ENCODE measurements at regions of chr1 and their contacts with region 1.

Region 1: GRCh38 chr1:17661546-17662157 is 93.5 kb upstream of the ACTL8 start:
- DNase-seq: peak; percentile 88
- ATAC-seq: peak; percentile 76
- H3K4me3 Mint-ChIP-seq: no peak overlapping the region
- H3K27ac Mint-ChIP-seq: peak overlapping the region; percentile 74
- H3K4me1 Mint-ChIP-seq: peaks cover 11% of the 10 kb centered on the region
- H3K27me3 Mint-ChIP-seq: no peaks in the 10 kb centered on the region
- CTCF ChIP-seq: peak; percentile 97

Region 2: DNA sequence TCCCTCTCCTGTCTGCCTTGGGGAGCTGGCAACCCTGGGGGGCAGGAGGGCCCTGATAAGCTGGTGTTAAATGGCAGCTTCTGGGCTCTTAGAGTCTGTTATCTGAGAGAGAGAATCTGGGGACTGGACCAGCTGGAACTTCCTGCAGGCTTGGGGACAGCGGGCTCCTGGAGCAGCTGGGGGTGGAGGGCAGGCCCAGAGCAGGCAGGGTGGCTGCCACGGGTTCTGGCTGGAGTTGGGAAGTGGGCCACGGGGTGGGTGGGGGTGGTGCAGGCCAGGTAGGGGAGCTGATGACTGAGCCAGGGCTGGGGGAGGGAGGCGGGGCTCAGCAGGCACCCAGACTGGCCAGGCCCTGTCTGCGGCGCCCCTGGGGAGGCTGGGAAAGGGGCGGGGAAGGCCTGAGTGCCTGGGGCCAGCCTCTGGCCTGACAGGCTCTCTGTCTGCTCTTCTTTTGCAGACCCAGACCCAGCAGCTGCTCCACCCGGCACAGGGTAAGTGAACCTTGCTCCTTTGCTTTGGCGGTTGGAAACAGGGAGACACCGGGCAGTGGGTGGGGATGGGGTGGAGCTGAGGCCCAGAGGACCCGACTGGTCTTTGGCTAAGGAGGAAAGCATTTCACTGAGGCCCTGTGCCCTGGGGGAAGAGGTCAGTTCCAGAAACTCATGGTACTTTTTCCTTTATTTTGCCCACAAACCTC is 73.5 kb before region 1 on chr1:
- CTCF ChIA-PET with region 1: interaction called, 13 read pairs
- POLR2A ChIA-PET with region 1: no interaction called
- DNase-seq: peak; percentile 56
- ATAC-seq: peak; percentile 53
- H3K4me3 Mint-ChIP-seq: no peak overlapping the region
- H3K27ac Mint-ChIP-seq: peak overlapping the region; percentile 89
- H3K4me1 Mint-ChIP-seq: peaks cover 38% of the 10 kb centered on the region
- H3K27me3 Mint-ChIP-seq: no peaks in the 10 kb centered on the region
- CTCF ChIP-seq: no peak

Region 3: DNA sequence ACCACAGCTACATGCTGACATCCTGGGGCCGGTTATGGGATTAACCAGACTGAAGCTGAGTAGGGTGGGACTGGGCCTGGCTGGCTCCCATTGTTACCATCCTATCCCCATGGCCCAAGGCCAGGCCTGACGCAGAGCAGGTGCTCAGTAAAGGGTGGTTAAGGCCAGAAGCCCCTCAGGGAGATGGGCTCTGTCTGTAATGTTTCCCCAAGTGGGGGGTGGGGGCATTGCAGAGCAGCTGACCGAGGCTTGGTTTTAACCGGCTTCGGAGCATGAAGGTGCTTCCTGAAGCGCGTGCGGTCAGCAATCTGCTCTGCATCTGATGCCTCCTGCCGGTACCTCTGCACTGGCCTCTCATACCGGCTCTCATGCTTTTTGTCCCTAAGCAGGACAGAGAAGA is 10.1 kb after region 1 on chr1:
- CTCF ChIA-PET with region 1: interaction called, 57 read pairs
- POLR2A ChIA-PET with region 1: no interaction called
- DNase-seq: peak; percentile 48
- ATAC-seq: peak; percentile 54
- H3K4me3 Mint-ChIP-seq: no peak overlapping the region
- H3K27ac Mint-ChIP-seq: no peak overlapping the region
- H3K4me1 Mint-ChIP-seq: peaks cover 22% of the 10 kb centered on the region
- H3K27me3 Mint-ChIP-seq: no peaks in the 10 kb centered on the region
- CTCF ChIP-seq: no peak

Region 4: DNA sequence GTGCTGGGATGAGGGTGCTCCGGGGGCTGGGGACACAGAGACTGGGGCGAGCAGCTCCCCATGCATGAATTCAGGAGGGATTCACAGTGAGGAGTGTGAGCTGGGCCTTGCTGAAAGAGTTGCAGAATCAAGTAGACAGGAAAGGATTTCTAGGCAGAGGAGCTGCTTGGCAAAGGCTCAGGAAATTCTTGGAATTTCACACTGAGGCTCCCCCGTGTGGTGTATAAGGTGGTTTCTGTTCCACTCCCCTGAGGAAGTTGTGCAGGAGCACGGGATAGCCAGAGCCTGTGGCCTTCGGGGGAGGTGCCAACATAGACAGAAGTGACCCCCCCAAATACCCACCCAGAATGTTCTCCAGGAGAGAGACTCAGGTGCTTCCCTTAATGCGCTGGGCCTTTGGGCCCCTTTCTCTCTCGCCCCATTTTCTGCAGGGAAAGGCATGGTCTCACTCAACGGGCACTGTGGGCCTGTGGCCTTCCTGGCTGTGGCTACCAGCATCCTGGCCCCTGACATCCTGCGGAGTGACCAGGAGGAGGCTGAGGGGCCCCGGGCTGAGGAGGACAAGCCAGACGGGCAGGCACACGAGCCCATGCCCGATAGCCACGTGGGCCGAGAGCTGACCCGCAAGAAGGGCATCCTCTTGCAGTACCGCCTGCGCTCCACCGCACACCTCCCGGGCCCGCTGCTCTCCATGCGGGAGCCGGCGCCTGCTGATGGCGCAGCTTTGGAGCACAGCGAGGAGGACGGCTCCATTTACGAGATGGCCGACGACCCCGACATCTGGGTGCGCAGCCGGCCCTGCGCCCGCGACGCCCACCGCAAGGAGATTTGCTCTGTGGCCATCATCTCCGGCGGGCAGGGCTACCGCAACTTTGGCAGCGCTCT is 35.0 kb after region 1 on chr1:
- CTCF ChIA-PET with region 1: interaction called, 79 read pairs
- POLR2A ChIA-PET with region 1: no interaction called
- DNase-seq: peak; percentile 68
- ATAC-seq: peak; percentile 81
- H3K4me3 Mint-ChIP-seq: no peak overlapping the region
- H3K27ac Mint-ChIP-seq: peak overlapping the region; percentile 90
- H3K4me1 Mint-ChIP-seq: peaks cover 18% of the 10 kb centered on the region
- H3K27me3 Mint-ChIP-seq: no peaks in the 10 kb centered on the region
- CTCF ChIP-seq: no peak

Region 5: DNA sequence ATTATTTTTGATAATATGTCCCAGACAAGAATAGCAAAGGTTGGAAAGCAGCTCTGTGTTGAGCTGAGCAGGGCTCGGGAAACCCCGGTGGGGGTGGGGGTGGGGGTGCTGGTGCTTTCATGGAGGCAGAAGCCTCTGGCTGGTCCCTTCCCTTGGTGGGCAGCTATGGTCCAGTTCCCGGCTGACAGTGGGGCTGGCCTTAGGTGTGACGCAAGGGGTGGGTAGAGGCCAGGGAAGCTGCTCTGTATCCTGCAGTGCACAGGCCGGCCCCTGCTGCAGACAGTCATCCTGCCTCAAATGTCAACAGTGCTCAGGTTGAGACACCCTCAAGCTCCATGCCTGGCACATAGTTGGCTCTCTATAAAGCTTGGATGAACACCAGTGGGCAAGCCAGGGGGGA is 102.3 kb after region 1 on chr1:
- CTCF ChIA-PET with region 1: interaction called, 11 read pairs
- POLR2A ChIA-PET with region 1: no interaction called
- DNase-seq: no peak
- ATAC-seq: no peak
- H3K4me3 Mint-ChIP-seq: no peak overlapping the region
- H3K27ac Mint-ChIP-seq: no peak overlapping the region
- H3K4me1 Mint-ChIP-seq: 0 out of 2 replicates have a peak, but pooled peaks cover 3% of the 10 kb centered on the region
- H3K27me3 Mint-ChIP-seq: peaks cover 13% of the 10 kb centered on the region
- CTCF ChIP-seq: no peak

Region 6: GRCh38 chr1:17826165-17826488 is 164.5 kb after region 1 on chr1:
- CTCF ChIA-PET with region 1: interaction called, 21 read pairs
- POLR2A ChIA-PET with region 1: no interaction called
- DNase-seq: peak; percentile 83
- ATAC-seq: peak; percentile 81
- H3K4me3 Mint-ChIP-seq: no peak overlapping the region
- H3K27ac Mint-ChIP-seq: no peak overlapping the region
- H3K4me1 Mint-ChIP-seq: peaks cover 7% of the 10 kb centered on the region
- H3K27me3 Mint-ChIP-seq: peaks cover 4% of the 10 kb centered on the region; the same call in 1 of the 2 replicates
- CTCF ChIP-seq: peak; percentile 80

Region 7: DNA sequence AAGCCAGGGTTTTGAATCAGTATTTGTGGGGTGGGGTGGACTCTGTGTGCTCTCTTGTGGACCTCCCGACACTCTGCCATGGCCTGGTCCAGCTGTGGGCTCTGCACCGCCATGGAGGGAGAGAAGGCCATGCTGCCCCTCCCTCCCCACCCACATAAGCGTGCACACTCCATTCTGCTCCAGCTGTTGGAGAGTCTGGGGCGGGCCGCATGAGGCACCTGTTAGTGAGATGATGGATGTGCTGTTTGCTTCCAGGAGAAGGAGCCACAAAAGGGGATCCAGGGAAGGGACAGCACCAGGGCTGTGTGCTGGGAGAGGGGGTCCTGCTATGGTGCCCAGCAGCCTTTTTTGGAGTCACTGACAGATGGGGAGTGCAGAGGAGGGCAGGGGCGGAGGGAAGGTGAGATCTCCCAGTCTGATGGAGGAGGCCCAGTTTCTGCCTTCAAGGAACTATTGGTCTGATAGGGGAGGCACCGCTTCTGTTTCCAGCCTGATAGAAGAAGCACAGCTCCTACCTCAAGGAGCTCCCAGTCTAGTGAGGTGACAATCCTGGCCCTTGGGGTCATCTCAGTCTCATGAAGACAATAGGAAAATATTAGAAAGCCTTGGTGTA is 194.9 kb after region 1 on chr1:
- CTCF ChIA-PET with region 1: no interaction called
- POLR2A ChIA-PET with region 1: no interaction called
- DNase-seq: no peak
- ATAC-seq: no peak
- H3K4me3 Mint-ChIP-seq: no peak overlapping the region
- H3K27ac Mint-ChIP-seq: no peak overlapping the region
- H3K4me1 Mint-ChIP-seq: peaks cover 2% of the 10 kb centered on the region
- H3K27me3 Mint-ChIP-seq: peaks cover 2% of the 10 kb centered on the region; the same call in 1 of the 2 replicates
- CTCF ChIP-seq: no peak